ENCODE measurements at regions of chr11 and their contacts with region 1.

Region 1: GRCh38 chr11:111841370-111842053 is 29.9 kb downstream of the ALG9 start:
- DNase-seq: peak; percentile 93 to 94
- H3K4me3 ChIP-seq: no peak overlapping the region
- H3K27ac ChIP-seq: peak overlapping the region in 1 of 5 donors; percentile 49
- H3K4me1 ChIP-seq: peaks cover 0 to 25% (median 12%) of the 10 kb centered on the region in 4 donors
- H3K27me3 ChIP-seq: no peaks in the 10 kb centered on the region
- CTCF ChIP-seq: peak in 5 of 7 experiments; percentile 66 to 92 (median 91)
- EP300 ChIP-seq: no peak
- POLR2A ChIP-seq: no peak

Region 2: GRCh38 chr11:111565114-111565720 is 276.3 kb before region 1 on chr11:
- intact Hi-C with region 1: loop called (anchors 10 kb)
- DNase-seq: peak; percentile 76 to 86
- H3K4me3 ChIP-seq: no peak overlapping the region
- H3K27ac ChIP-seq: no peak overlapping the region
- H3K4me1 ChIP-seq: peaks cover 0 to 11% (median 4%) of the 10 kb centered on the region in 4 donors
- H3K27me3 ChIP-seq: no peaks in the 10 kb centered on the region
- CTCF ChIP-seq: peak in 5 of 7 experiments; percentile 38 to 94 (median 85)
- EP300 ChIP-seq: no peak
- POLR2A ChIP-seq: no peak

Region 3: DNA sequence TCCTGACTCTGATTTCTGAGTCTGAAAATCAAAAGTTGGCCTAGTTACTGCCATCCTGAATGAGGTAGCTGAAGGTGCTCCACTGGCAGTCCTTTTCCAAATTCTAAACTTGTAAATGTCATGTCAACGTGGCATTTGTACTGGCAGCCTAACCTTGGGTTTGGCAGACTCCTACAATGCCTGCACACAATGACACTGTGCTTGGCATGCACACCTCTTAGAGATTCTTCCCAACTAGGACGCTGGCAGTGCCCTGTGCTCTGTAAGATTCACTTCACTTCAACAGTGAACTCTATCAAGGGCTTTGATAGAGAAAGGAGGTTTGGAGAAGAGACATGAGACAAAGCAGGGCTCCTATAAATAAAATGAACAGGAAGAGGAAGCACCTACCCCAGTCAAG is 53.5 kb before region 1 on chr11:
- intact Hi-C with region 1: loop called (anchors 10 kb)
- DNase-seq: no peak
- H3K4me3 ChIP-seq: no peak overlapping the region
- H3K27ac ChIP-seq: peak overlapping the region in 1 of 5 donors; percentile 13
- H3K4me1 ChIP-seq: peaks cover 0 to 11% (median 3%) of the 10 kb centered on the region in 4 donors
- H3K27me3 ChIP-seq: no peaks in the 10 kb centered on the region
- CTCF ChIP-seq: no peak
- EP300 ChIP-seq: no peak
- POLR2A ChIP-seq: no peak

Region 4: GRCh38 chr11:111878849-111879636 is 37.5 kb after region 1 on chr11 and contains the starts of genes CFAP68 and FDXACB1:
- intact Hi-C with region 1: no loop called
- DNase-seq: peak; percentile 97 to 99
- H3K4me3 ChIP-seq: peak within 1 kb of the TSS; percentile 52 to 70 (median 60)
- H3K27ac ChIP-seq: peak within 1 kb of the TSS; percentile 85 to 97 (median 95)
- H3K4me1 ChIP-seq: peaks cover 6 to 20% (median 19%) of the 10 kb centered on the region in 4 donors
- H3K27me3 ChIP-seq: no peaks in the 10 kb centered on the region
- CTCF ChIP-seq: peak in 6 of 7 experiments; percentile 87 to 99 (median 96)
- EP300 ChIP-seq: peak; percentile 92
- POLR2A ChIP-seq: no peak
- total RNA-seq, gene CFAP68: 3.9 to 51.9 (median 5.3) TPM in 4 of 5 donors, not detected in the other
- total RNA-seq, gene FDXACB1: 0.29 to 4.3 (median 2.2) TPM in 3 of 5 donors, not detected in the others